Activated T-helper 1 cell treated with anti-CD3 and anti-CD28 coated beads, Interleukin-12 subunit alpha, Interleukin-12 subunit beta, Interleukin-2, Interleukin-4 antibody, amounts not matched to agents 30 ng/mL and 10 ng/mL and 1 ng/mL, durations not matched to agents 14 hours and 24 hours and 36 hours (primary cell): ENCODE measurements at regions of chr9 and their contacts with region 1.

Region 1: GRCh38 chr9:10054456-10054855 is 558.3 kb downstream of the PTPRD start:
- DNase-seq: no peak
- H3K4me3 Mint-ChIP-seq: no peak overlapping the region
- H3K27ac Mint-ChIP-seq: no peak overlapping the region
- H3K4me1 Mint-ChIP-seq: no peaks in the 10 kb centered on the region
- H3K27me3 Mint-ChIP-seq: no peaks in the 10 kb centered on the region

Region 2: GRCh38 chr9:10041726-10042229 is 12.7 kb before region 1 on chr9:
- intact Hi-C with region 1: loop called (anchors 1 kb)
- DNase-seq: no peak
- H3K4me3 Mint-ChIP-seq: no peak overlapping the region
- H3K27ac Mint-ChIP-seq: no peak overlapping the region
- H3K4me1 Mint-ChIP-seq: no peaks in the 10 kb centered on the region
- H3K27me3 Mint-ChIP-seq: no peaks in the 10 kb centered on the region